ENCODE measurements at regions of chr17 and their contacts with region 1.

Region 1: DNA sequence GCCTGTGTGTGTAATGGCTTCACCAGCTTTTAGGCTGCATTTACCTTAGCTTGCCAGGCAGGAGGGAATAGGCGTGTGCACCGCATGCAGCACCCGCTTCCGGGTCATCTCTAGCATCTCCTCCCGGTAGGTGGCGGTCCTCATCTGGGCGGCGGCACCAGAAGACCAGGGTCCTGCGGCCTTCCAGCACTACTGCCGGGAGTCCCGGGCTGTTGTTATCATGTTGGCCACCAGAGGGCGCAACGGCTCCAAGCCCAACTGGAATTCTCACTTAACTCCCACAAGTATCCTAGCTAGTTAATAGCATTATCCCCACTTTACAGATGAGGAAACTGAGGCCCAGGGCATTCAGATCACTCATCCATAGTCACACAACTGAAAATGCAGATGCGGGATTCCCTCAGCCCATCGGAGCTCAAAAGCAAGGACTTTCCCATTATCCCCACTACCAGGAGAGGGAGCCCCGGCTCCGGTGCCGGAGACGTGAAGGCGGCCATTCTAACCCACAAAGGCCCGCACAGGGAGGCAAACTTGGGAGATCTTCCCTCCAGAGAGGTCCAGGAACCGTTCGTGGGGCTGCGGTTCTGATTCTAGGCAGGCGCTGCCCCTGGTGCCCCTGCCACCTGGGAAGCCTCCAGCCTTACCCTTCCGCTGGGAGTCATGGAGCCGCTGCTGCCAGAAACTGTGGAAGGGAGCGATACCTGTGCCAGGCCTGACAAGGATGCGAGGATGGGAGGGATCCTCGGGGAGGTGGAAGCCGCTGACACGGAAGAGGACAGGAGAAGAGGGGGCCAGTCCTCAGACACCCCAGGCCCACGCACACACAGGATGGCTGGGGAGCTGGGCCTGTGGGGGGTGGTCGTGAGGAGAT is 23.9 kb downstream of the LGALS9 start:
- DNase-seq: peak; percentile 61
- ATAC-seq: peak; percentile 91
- H3K4me3 Mint-ChIP-seq: no peak overlapping the region
- H3K27ac Mint-ChIP-seq: no peak overlapping the region
- H3K4me1 Mint-ChIP-seq: peaks cover 8% of the 10 kb centered on the region
- H3K27me3 Mint-ChIP-seq: peaks cover 2% of the 10 kb centered on the region
- CTCF ChIP-seq: peak; percentile 97

Region 2: DNA sequence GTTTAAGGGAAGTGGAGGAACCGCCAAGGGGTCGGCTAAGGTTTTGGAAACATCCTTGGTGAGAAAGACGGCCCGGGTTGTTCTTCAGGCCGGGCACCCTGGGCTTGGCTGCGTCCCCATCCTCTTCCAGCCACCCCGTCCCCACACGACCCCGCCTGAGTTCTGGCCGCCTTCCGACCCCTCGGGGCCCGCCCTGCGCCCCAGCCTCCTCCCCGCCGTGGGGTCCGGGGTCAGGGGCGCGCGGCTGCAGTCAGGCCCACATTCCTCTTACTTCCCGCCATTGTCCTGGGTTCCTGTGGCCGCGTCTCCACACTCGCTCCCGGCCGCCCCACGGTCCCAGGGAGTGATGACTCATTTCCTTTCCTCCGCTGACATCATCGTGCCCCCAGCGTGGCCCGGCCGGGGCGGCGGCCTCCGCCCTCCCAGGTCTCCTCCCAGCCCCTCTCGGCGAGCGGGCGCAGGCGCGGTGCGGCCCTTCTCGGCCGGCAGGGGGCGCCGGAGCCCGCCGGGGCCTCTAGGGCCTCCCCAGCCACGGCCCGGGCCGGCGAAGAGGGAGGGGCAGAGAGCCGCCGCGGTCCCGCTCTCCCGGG is 301.3 kb before region 1 on chr17:
- CTCF ChIA-PET with region 1: interaction called, 3 read pairs
- POLR2A ChIA-PET with region 1: no interaction called
- intact Hi-C with region 1: loop called (anchors 1 kb)
- DNase-seq: peak; percentile 90
- ATAC-seq: peak; percentile 87
- H3K4me3 Mint-ChIP-seq: peak overlapping the region; percentile 89
- H3K27ac Mint-ChIP-seq: peak overlapping the region; percentile 83
- H3K4me1 Mint-ChIP-seq: peaks cover 22% of the 10 kb centered on the region
- H3K27me3 Mint-ChIP-seq: no peaks in the 10 kb centered on the region
- CTCF ChIP-seq: peak; percentile 50

Region 3: GRCh38 chr17:27381007-27381501 is 273.8 kb before region 1 on chr17:
- CTCF ChIA-PET with region 1: no interaction called
- POLR2A ChIA-PET with region 1: no interaction called
- intact Hi-C with region 1: loop called (anchors 2 kb)
- DNase-seq: peak; percentile 70
- ATAC-seq: peak; percentile 94
- H3K4me3 Mint-ChIP-seq: no peak overlapping the region
- H3K27ac Mint-ChIP-seq: no peak overlapping the region
- H3K4me1 Mint-ChIP-seq: peaks cover 6% of the 10 kb centered on the region
- H3K27me3 Mint-ChIP-seq: peaks cover 18% of the 10 kb centered on the region
- CTCF ChIP-seq: peak; percentile 35

Region 4: DNA sequence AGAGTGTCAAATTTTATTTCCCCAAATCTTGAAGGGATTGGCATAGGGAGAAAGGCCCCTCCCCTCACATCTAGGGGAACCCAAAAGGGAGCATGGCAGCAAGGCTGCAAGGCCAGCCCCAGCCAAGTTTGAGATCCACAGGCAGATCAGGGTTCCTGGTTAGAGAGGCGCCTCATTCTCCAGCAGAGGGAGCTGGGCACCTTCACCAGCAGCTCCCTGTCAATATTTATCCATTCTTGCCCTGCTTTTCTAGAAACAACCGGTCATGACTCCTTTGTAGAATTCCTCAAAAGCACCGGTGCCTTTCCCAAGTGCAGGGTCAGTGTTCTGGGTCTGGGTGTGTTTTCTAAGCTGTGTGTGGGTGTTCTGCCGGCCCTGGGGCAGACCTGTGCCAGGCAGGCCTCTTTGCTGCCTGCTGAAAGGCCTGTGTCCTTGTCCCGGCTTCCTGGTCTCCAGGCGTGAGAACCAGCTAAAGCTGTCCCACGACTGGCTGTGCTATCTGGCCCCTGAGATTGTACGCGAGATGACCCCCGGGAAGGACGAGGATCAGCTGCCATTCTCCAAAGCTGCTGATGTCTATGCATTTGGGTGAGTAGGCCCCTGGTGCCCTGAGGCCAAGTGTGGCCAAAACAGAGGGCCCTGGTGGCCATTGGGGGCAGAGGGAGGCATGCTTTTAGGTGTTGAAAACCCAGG is 45.1 kb before region 1 on chr17:
- CTCF ChIA-PET with region 1: interaction called, 112 read pairs
- POLR2A ChIA-PET with region 1: no interaction called
- intact Hi-C with region 1: loop called (anchors 1 kb)
- DNase-seq: no peak
- ATAC-seq: no peak
- H3K4me3 Mint-ChIP-seq: no peak overlapping the region
- H3K27ac Mint-ChIP-seq: no peak overlapping the region
- H3K4me1 Mint-ChIP-seq: no peaks in the 10 kb centered on the region
- H3K27me3 Mint-ChIP-seq: no peaks in the 10 kb centered on the region
- CTCF ChIP-seq: no peak

Region 5: DNA sequence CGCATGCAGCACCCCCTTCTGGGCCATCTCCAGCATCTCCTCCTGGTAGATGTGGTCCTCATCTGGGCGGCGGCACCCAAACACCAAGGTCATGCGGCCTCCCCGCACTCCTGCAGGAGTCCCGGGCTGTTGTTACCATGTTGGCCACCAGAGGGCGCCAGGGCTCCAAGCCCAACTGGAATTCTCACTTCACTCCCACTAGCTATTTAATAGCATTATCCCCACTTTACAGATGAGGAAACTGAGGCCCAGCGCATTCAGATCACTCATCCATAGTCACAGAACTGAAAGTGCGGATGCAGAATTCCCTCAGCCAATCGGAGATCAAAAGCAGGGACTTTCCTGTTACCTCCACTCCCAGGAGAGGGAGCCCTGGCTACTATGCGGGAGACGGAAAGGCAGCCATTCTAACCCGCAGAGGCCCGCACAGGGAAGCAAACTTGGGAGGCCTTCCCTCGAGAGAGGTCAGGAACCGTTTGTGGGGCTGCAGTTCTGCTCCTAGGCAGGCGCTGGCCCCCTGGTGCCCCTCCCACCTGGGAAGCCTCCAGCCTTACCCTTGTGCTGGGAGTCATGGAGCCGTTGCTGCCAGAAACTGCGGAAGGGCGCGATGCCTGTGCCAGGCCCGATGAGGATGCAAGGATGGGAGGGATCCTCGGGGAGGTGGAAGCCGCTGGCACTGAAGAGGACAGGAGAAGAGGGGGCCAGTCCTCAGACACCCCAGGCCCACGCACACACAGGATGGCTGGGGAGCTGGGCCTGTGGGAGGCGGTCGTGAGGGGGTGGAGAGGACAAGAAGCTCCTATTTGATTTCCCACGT is 105.4 kb after region 1 on chr17:
- CTCF ChIA-PET with region 1: interaction called, 11 read pairs
- POLR2A ChIA-PET with region 1: no interaction called
- intact Hi-C with region 1: no loop called
- DNase-seq: peak; percentile 73
- ATAC-seq: peak; percentile 50
- H3K4me3 Mint-ChIP-seq: no peak overlapping the region
- H3K27ac Mint-ChIP-seq: no peak overlapping the region
- H3K4me1 Mint-ChIP-seq: no peaks in the 10 kb centered on the region
- H3K27me3 Mint-ChIP-seq: peaks cover 4% of the 10 kb centered on the region
- CTCF ChIP-seq: peak; percentile 66

Region 6: DNA sequence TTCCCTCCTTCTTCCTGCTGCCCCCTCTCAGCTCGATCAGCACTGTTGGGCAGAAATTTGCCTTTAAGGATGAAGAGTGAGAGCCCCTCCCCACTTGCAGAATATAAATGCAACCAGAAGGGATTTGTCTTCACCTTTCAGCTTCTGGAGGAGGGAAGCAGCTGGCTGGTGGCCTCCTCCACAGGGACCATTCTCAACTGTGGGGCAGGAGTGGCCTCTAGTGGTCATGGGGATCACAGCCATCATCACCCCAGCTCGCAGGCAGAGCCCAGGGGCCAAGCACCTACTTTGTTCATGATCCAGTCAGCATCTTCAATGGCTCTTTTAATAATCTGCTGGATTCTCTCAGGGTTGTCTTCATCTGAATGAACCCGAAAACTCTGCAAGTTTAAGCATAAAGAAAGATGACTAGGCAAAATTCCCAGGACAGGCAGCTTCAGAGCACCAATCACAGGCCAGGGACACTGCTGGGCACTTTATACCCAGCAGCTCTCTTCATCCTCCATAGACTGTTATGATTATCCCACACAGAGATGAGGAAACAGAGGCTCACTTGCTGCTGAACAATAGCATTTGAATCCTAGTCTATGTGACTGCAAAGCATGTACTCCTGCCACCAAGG is 225.2 kb after region 1 on chr17:
- CTCF ChIA-PET with region 1: interaction called, 13 read pairs
- POLR2A ChIA-PET with region 1: no interaction called
- intact Hi-C with region 1: loop called (anchors 1 kb)
- DNase-seq: peak; percentile 46
- ATAC-seq: peak; percentile 85
- H3K4me3 Mint-ChIP-seq: no peak overlapping the region
- H3K27ac Mint-ChIP-seq: no peak overlapping the region
- H3K4me1 Mint-ChIP-seq: no peaks in the 10 kb centered on the region
- H3K27me3 Mint-ChIP-seq: no peaks in the 10 kb centered on the region
- CTCF ChIP-seq: peak; percentile 38

Region 7: GRCh38 chr17:28252436-28252835 is 597.5 kb after region 1 on chr17:
- CTCF ChIA-PET with region 1: no interaction called
- POLR2A ChIA-PET with region 1: no interaction called
- intact Hi-C with region 1: loop called (anchors 2 kb)
- DNase-seq: no peak
- ATAC-seq: no peak
- H3K4me3 Mint-ChIP-seq: no peak overlapping the region
- H3K27ac Mint-ChIP-seq: no peak overlapping the region
- H3K4me1 Mint-ChIP-seq: peaks cover 6% of the 10 kb centered on the region
- H3K27me3 Mint-ChIP-seq: peaks cover 17% of the 10 kb centered on the region
- CTCF ChIP-seq: no peak

Region 8: GRCh38 chr17:28500712-28501379 is 846.0 kb after region 1 on chr17:
- CTCF ChIA-PET with region 1: no interaction called
- POLR2A ChIA-PET with region 1: no interaction called
- intact Hi-C with region 1: no loop called
- DNase-seq: peak; percentile 34
- ATAC-seq: peak; percentile 83
- H3K4me3 Mint-ChIP-seq: peak overlapping the region; percentile 17
- H3K27ac Mint-ChIP-seq: peak overlapping the region; percentile 71
- H3K4me1 Mint-ChIP-seq: peaks cover 24% of the 10 kb centered on the region
- H3K27me3 Mint-ChIP-seq: peaks cover 6% of the 10 kb centered on the region
- CTCF ChIP-seq: no peak

Measured in activated B cell treated with CpG ODN at 0.5 μM for 24 hours (primary cell).